ENCODE measurements at regions of chr1 and their contacts with region 1.

Region 1: GRCh38 chr1:241847796-241848685 is at the start of gene EXO1:
- DNase-seq: peak; percentile 88
- H3K4me3 ChIP-seq: peak within 1 kb of the TSS; percentile 60 to 98 (median 72)
- H3K27ac ChIP-seq: peak within 1 kb of the TSS; percentile 96 to 99 (median 96)
- H3K4me1 ChIP-seq: peaks cover 6 to 16% (median 13%) of the 10 kb centered on the region in 4 donors
- H3K27me3 ChIP-seq: no peaks in the 10 kb centered on the region
- CTCF ChIP-seq: peak in 4 of 5 experiments; percentile 8 to 21 (median 14)
- EP300 ChIP-seq: no peak
- POLR2A ChIP-seq: peak; percentile 17
- total RNA-seq, gene EXO1: 0.96 to 32.0 (median 1.1) TPM in 3 of 4 donors, not detected in the other

Region 2: DNA sequence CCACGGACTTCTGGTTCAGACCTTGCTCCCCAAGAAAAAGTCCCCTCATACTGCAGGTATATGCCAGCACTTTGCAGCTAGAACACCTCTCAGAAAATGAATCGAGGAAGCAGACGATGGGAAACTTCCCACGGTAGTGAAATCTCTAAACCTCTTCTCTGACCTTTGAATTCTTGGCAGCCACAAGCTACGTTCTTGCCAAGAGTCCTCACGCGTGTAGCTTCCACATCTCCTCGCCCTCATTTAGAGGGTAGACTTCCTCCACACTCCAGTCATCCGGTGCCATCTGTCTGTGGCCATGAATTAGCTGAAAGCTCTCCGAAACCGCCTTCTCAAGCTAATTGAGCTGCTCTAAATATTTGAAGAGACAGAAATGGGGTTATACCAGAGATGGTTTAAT is 618.8 kb before region 1 on chr1:
- in situ Hi-C with region 1: no loop called
- intact Hi-C with region 1: no loop called
- DNase-seq: peak; percentile 54
- H3K4me3 ChIP-seq: no peak overlapping the region
- H3K27ac ChIP-seq: peak overlapping the region in 1 of 4 donors; percentile 32
- H3K4me1 ChIP-seq: peaks cover 0 to 22% (median 2%) of the 10 kb centered on the region in 4 donors
- H3K27me3 ChIP-seq: no peaks in the 10 kb centered on the region
- CTCF ChIP-seq: no peak
- EP300 ChIP-seq: no peak
- POLR2A ChIP-seq: no peak

Region 3: DNA sequence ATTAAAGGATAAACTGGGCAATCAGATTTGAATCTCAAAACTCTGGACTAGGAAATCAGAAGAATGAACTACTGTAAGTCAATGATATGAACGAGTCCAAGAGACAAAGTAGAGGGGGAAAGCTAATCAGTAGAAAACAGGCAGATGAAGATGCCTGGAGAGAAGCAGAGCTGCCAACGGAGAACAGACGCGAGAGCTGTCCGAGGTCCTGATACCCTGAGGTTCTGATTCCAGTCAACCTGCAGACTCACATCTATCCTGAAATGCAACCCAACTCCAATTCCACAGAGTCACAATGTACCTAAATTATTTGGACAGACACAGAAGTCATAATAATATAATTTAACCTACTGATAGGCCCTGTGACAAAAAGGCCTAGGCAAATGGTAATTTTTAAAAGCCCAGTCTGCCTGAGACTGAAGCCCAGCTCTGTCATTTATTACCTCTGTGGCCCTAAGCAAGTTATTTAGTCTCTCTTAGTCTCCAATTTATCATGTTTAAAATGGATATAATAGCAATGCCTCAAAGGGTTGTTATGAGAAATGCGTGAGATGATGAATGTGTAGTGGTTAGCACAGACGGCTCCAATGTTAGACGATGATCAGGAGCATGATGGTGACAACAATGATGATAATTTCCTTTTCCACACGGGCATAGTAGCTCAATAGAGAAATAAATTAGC is 524.4 kb before region 1 on chr1:
- in situ Hi-C with region 1: no loop called
- intact Hi-C with region 1: no loop called
- DNase-seq: peak; percentile 10
- H3K4me3 ChIP-seq: no peak overlapping the region
- H3K27ac ChIP-seq: no peak overlapping the region
- H3K4me1 ChIP-seq: no peaks in the 10 kb centered on the region
- H3K27me3 ChIP-seq: no peaks in the 10 kb centered on the region
- CTCF ChIP-seq: no peak
- EP300 ChIP-seq: no peak
- POLR2A ChIP-seq: no peak

Region 4: GRCh38 chr1:241519308-241520079 is 328.5 kb before region 1 on chr1 and contains the start of gene FH:
- in situ Hi-C with region 1: loop called in 1 of 4 experiments (anchors 25 kb)
- intact Hi-C with region 1: no loop called
- DNase-seq: peak; percentile 96
- H3K4me3 ChIP-seq: peak within 1 kb of the TSS; percentile 55 to 90 (median 84)
- H3K27ac ChIP-seq: peak within 1 kb of the TSS; percentile 92 to 96 (median 92)
- H3K4me1 ChIP-seq: peaks cover 9 to 29% (median 12%) of the 10 kb centered on the region in 4 donors
- H3K27me3 ChIP-seq: peaks cover 28% of the 10 kb centered on the region
- CTCF ChIP-seq: peak in 1 of 5 experiments; percentile 9
- EP300 ChIP-seq: no peak
- POLR2A ChIP-seq: peak; percentile 87
- total RNA-seq, gene FH: 21.7 to 83.8 (median 42.0) TPM

Region 5: GRCh38 chr1:241531195-241532161 is 316.6 kb before region 1 on chr1:
- in situ Hi-C with region 1: loop called in 1 of 4 experiments (anchors 25 kb)
- intact Hi-C with region 1: no loop called
- DNase-seq: no peak
- H3K4me3 ChIP-seq: peak overlapping the region; percentile 13 to 61 (median 40)
- H3K27ac ChIP-seq: peak overlapping the region; percentile 59 to 62 (median 59)
- H3K4me1 ChIP-seq: peaks cover 0 to 8% (median 1%) of the 10 kb centered on the region in 4 donors
- H3K27me3 ChIP-seq: peaks cover 4% of the 10 kb centered on the region
- CTCF ChIP-seq: peak; percentile 53 to 73 (median 65)
- EP300 ChIP-seq: no peak
- POLR2A ChIP-seq: no peak

Region 6: DNA sequence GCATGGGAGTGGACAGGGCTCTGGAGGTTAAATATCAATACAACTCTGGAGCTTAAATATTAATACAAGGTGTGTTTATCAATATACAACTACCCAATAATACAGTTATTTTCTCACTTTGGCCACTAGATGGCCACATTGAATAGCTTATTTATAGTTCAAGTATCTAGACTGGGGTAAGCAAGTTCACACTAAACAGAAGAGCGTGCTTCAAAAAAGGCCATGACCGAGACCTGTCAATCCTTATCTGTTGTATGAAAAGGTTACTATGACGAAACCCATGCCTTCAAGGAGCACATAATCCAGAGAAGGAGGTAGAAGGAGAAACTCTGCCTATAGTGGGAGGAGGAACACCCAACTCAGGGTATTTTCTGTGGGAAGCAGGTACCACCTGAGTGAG is 237.0 kb before region 1 on chr1:
- in situ Hi-C with region 1: loop called in 2 of 4 experiments (anchors 25 kb)
- intact Hi-C with region 1: no loop called
- DNase-seq: no peak
- H3K4me3 ChIP-seq: no peak overlapping the region
- H3K27ac ChIP-seq: no peak overlapping the region
- H3K4me1 ChIP-seq: peaks cover 3 to 44% (median 12%) of the 10 kb centered on the region in 4 donors
- H3K27me3 ChIP-seq: no peaks in the 10 kb centered on the region
- CTCF ChIP-seq: peak; percentile 67 to 82 (median 74)
- EP300 ChIP-seq: no peak
- POLR2A ChIP-seq: no peak